GM18951 (cell line): ENCODE measurements at regions of chr11 and their contacts with region 1.

Region 1: DNA sequence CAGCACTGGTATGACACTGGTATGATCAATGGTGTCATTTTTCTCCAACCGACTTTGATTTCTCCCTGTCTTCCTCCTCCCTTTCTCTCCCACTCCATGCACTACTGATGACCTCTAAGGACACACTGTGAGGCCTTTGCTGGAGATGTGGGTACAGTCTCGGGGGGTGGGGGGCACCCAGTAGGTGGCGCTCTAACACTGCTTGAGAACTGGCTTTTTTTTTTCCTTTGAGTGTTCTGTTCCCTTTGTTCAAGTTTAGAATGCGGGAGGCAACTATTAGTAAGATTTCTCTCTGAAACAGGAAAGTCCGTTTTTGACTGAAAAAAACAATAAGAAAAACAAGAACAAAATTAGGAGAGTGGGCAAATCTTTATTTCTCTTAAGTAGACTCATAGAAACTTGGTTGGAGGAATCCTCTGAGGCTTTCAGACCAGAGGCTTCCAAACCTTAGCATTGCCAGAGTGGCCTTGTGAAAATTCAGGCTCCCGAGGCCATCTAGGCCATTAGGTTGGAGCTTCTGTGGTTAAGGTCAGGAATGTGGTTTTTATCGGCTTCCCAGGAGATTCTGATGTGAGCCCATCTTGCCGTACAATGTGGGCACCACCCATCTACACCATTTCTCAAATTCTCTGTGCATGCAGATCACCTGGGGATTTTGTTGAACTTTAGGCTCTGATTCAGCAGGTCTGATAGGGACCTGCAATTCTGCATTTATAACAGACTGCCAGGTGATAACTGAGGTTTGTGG is 43.2 kb downstream of the PANX1 start:
- POLR2A ChIP-seq: no peak

Region 2: GRCh38 chr11:94128171-94128745 is 43.6 kb before region 1 on chr11:
- in situ Hi-C with region 1: no loop called
- POLR2A ChIP-seq: no peak

Region 3: GRCh38 chr11:94511932-94512781 is 340.3 kb after region 1 on chr11 and contains the start of gene C11orf97:
- in situ Hi-C with region 1: loop called (anchors 25 kb)
- POLR2A ChIP-seq: no peak

Region 4: GRCh38 chr11:94553938-94554337 is 382.1 kb after region 1 on chr11:
- in situ Hi-C with region 1: no loop called
- POLR2A ChIP-seq: no peak